PC-9 (cell line): ENCODE measurements at regions of chr13 and their contacts with region 1.

Region 1: DNA sequence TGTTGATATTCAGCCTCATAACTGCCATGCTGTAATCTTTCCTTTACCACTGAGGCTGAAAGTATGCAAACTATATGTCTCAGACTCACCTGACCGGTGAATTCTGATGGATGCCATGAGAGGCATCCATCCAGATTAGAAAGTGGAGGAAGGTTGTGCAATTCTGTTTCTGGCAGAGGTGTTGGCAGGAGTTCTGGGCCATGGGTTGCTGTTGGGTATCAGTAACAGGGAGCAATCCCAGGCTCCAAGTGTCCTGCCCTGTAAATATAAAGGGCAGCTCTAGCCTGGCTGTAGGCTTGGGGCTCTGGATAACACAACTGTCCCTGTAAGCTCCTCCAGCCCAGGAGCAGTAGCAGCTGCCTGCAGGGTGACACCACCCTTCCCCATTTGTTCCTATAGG is 77.4 kb upstream of the ABCC4 start:
- DNase-seq: peak in 1 of 2 experiments; percentile 80
- H3K4me3 ChIP-seq: no peak overlapping the region
- H3K27ac ChIP-seq: no peak overlapping the region
- H3K4me1 ChIP-seq: peaks cover 29% of the 10 kb centered on the region
- H3K27me3 ChIP-seq: no peaks in the 10 kb centered on the region
- CTCF ChIP-seq: no peak

Region 2: DNA sequence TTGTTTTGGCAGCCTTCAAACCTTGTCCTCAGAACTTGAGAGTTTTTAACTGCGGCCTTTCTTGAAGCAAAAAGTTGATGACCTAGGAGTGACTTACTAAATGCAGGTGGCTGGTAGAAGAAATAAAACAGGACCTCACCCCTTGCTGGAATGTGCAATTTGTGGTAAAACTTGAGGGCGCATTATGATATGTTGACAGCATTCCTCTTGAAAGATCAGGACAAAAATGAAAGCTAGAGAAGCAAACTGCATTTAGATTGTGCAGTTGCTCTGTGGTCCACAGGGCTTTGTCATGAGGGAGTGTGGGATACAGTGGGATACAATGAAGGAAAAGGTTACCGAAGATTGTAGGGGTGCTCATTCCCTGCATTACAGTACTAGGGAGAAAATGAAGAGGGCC is 1647.8 kb before region 1 on chr13:
- CTCF ChIA-PET with region 1: no interaction called
- POLR2A ChIA-PET with region 1: no interaction called
- intact Hi-C with region 1: no loop called
- DNase-seq: no peak
- H3K4me3 ChIP-seq: no peak overlapping the region
- H3K27ac ChIP-seq: no peak overlapping the region
- H3K4me1 ChIP-seq: no peaks in the 10 kb centered on the region
- H3K27me3 ChIP-seq: no peaks in the 10 kb centered on the region
- CTCF ChIP-seq: no peak

Region 3: GRCh38 chr13:95191821-95192563 is 186.6 kb before region 1 on chr13:
- CTCF ChIA-PET with region 1: interaction called, 10 read pairs
- POLR2A ChIA-PET with region 1: no interaction called
- intact Hi-C with region 1: loop called (anchors 1 kb)
- DNase-seq: peak; percentile 67 to 78
- H3K4me3 ChIP-seq: no peak overlapping the region
- H3K27ac ChIP-seq: no peak overlapping the region
- H3K4me1 ChIP-seq: no peaks in the 10 kb centered on the region
- H3K27me3 ChIP-seq: no peaks in the 10 kb centered on the region
- CTCF ChIP-seq: peak; percentile 96

Region 4: DNA sequence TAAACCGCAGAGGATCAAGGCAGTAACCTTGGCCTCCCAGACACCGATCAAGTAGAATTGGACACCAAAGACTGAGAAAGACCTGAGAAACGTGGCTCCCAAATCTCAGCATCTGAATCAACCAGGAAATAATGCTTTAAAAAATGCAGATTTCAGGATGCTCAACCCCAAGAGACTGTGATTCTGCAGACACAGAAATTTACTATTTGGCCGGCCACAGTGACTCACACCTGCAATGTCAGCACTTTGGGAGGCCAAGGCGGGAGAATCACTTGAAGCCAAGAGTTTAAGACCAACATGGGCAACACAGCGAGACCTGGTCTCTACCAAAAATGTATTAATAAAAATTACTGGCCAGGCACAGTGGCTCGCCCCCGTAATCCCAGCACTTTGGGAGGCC is 83.6 kb before region 1 on chr13:
- CTCF ChIA-PET with region 1: interaction called, 14 read pairs
- POLR2A ChIA-PET with region 1: no interaction called
- intact Hi-C with region 1: loop called (anchors 1 kb)
- DNase-seq: no peak
- H3K4me3 ChIP-seq: no peak overlapping the region
- H3K27ac ChIP-seq: no peak overlapping the region
- H3K4me1 ChIP-seq: peaks cover 24% of the 10 kb centered on the region
- H3K27me3 ChIP-seq: no peaks in the 10 kb centered on the region
- CTCF ChIP-seq: no peak

Region 5: DNA sequence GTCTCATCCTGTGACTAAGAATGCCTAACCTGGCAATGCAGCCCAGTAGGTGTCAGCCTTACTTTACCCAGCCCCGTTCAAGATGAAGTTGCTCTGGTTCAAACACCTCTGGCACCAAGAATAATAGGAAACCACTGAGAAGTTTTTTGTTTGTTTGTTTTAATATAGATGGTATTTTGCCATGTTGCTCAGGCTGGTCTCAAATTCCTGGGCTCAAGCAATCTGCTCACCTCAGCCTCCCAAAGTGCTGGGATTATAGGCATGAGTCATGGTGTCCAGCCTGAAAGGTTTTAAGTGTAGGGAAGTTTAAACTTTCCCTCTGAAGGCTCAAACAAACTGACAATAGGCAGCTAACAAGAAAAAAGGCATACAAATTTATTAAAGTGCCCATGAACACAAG is 26.1 kb before region 1 on chr13:
- CTCF ChIA-PET with region 1: interaction called, 8 read pairs
- POLR2A ChIA-PET with region 1: no interaction called
- intact Hi-C with region 1: loop called (anchors 1 kb)
- DNase-seq: peak; percentile 29 to 85
- H3K4me3 ChIP-seq: no peak overlapping the region
- H3K27ac ChIP-seq: no peak overlapping the region
- H3K4me1 ChIP-seq: peaks cover 14% of the 10 kb centered on the region
- H3K27me3 ChIP-seq: no peaks in the 10 kb centered on the region
- CTCF ChIP-seq: peak; percentile 34; the same call in 1 of the 2 replicates